Calu3 (cell line): ENCODE measurements at regions of chr17 and their contacts with region 1.

Region 1: GRCh38 chr17:67993596-67994361 is 2.5 kb downstream of the C17orf58 start:
- DNase-seq: peak; percentile 89
- H3K4me3 Mint-ChIP-seq: peak overlapping the region; percentile 87
- H3K27ac Mint-ChIP-seq: peak overlapping the region; percentile 69
- H3K4me1 Mint-ChIP-seq: peaks cover 21% of the 10 kb centered on the region
- H3K27me3 Mint-ChIP-seq: no peaks in the 10 kb centered on the region
- CTCF ChIP-seq: no peak

Region 2: GRCh38 chr17:68019675-68020408 is 26.1 kb after region 1 on chr17:
- CTCF ChIA-PET with region 1: no interaction called
- intact Hi-C with region 1: loop called (anchors 2 kb)
- DNase-seq: peak; percentile 98
- H3K4me3 Mint-ChIP-seq: peak overlapping the region; percentile 76
- H3K27ac Mint-ChIP-seq: peak overlapping the region; percentile 99
- H3K4me1 Mint-ChIP-seq: peaks cover 15% of the 10 kb centered on the region
- H3K27me3 Mint-ChIP-seq: peaks cover 8% of the 10 kb centered on the region
- CTCF ChIP-seq: peak; percentile 38

Region 3: GRCh38 chr17:69327060-69327831 is 1333.5 kb after region 1 on chr17 and contains the start of gene ABCA5:
- CTCF ChIA-PET with region 1: no interaction called
- intact Hi-C with region 1: no loop called
- DNase-seq: peak; percentile 92
- H3K4me3 Mint-ChIP-seq: peak within 1 kb of the TSS; percentile 98
- H3K27ac Mint-ChIP-seq: peak within 1 kb of the TSS; percentile 80
- H3K4me1 Mint-ChIP-seq: peaks cover 11% of the 10 kb centered on the region
- H3K27me3 Mint-ChIP-seq: no peaks in the 10 kb centered on the region
- CTCF ChIP-seq: no peak
- total RNA-seq, gene ABCA5: 8.9 and 10.2 TPM in 2 replicates